Thyroid gland (tissue), 4 donors: ENCODE measurements at regions of chr19 and their contacts with region 1.

Region 1: GRCh38 chr19:37551129-37551993 is 43.2 kb downstream of the ZNF571 start:
- DNase-seq: no peak
- H3K4me3 ChIP-seq: no peak overlapping the region
- H3K27ac ChIP-seq: no peak overlapping the region
- H3K4me1 ChIP-seq: no peaks in the 10 kb centered on the region
- H3K27me3 ChIP-seq: no peaks in the 10 kb centered on the region
- CTCF ChIP-seq: no peak
- POLR2A ChIP-seq: no peak

Region 2: GRCh38 chr19:36638862-36639510 is 912.4 kb before region 1 on chr19:
- intact Hi-C with region 1: loop called (anchors 10 kb)
- DNase-seq: no peak
- H3K4me3 ChIP-seq: no peak overlapping the region
- H3K27ac ChIP-seq: no peak overlapping the region
- H3K4me1 ChIP-seq: no peaks in the 10 kb centered on the region
- H3K27me3 ChIP-seq: no peaks in the 10 kb centered on the region
- CTCF ChIP-seq: no peak
- POLR2A ChIP-seq: no peak

Region 3: DNA sequence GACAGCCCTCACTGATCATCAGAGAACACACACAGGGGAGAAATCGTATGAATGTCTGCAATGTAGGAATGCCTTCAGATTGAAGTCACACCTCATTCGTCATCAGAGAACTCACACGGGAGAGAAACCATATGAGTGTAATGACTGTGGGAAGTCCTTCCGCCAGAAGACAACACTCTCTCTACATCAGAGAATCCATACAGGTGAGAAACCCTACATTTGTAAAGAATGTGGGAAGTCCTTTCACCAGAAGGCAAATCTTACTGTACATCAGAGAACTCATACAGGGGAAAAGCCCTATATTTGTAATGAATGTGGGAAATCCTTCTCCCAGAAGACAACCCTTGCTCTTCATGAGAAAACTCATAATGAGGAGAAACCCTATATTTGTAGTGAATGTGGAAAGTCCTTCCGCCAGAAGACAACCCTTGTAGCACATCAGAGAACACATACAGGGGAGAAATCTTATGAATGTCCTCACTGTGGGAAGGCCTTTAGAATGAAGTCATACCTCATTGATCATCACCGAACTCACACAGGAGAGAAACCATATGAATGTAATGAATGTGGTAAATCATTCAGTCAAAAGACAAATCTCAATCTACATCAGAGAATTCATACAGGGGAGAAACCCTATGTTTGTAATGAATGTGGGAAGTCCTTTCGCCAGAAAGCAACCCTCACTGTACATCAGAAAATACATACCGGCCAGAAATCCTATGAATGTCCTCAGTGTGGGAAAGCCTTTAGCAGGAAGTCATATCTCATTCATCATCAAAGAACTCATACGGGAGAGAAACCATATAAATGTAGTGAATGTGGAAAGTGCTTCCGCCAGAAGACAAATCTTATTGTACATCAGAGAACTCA is 831.4 kb before region 1 on chr19:
- intact Hi-C with region 1: loop called (anchors 5 kb)
- DNase-seq: no peak
- H3K4me3 ChIP-seq: no peak overlapping the region
- H3K27ac ChIP-seq: no peak overlapping the region
- H3K4me1 ChIP-seq: no peaks in the 10 kb centered on the region
- H3K27me3 ChIP-seq: no peaks in the 10 kb centered on the region
- CTCF ChIP-seq: no peak
- POLR2A ChIP-seq: no peak

Region 4: GRCh38 chr19:36819130-36819630 is 732.2 kb before region 1 on chr19:
- intact Hi-C with region 1: loop called (anchors 10 kb)
- DNase-seq: no peak
- H3K4me3 ChIP-seq: no peak overlapping the region
- H3K27ac ChIP-seq: no peak overlapping the region
- H3K4me1 ChIP-seq: no peaks in the 10 kb centered on the region
- H3K27me3 ChIP-seq: no peaks in the 10 kb centered on the region
- CTCF ChIP-seq: no peak
- POLR2A ChIP-seq: no peak

Region 5: GRCh38 chr19:37355901-37356300 is 195.5 kb before region 1 on chr19:
- intact Hi-C with region 1: no loop called
- DNase-seq: no peak
- H3K4me3 ChIP-seq: no peak overlapping the region
- H3K27ac ChIP-seq: no peak overlapping the region
- H3K4me1 ChIP-seq: no peaks in the 10 kb centered on the region
- H3K27me3 ChIP-seq: no peaks in the 10 kb centered on the region
- CTCF ChIP-seq: no peak
- POLR2A ChIP-seq: no peak

Region 6: DNA sequence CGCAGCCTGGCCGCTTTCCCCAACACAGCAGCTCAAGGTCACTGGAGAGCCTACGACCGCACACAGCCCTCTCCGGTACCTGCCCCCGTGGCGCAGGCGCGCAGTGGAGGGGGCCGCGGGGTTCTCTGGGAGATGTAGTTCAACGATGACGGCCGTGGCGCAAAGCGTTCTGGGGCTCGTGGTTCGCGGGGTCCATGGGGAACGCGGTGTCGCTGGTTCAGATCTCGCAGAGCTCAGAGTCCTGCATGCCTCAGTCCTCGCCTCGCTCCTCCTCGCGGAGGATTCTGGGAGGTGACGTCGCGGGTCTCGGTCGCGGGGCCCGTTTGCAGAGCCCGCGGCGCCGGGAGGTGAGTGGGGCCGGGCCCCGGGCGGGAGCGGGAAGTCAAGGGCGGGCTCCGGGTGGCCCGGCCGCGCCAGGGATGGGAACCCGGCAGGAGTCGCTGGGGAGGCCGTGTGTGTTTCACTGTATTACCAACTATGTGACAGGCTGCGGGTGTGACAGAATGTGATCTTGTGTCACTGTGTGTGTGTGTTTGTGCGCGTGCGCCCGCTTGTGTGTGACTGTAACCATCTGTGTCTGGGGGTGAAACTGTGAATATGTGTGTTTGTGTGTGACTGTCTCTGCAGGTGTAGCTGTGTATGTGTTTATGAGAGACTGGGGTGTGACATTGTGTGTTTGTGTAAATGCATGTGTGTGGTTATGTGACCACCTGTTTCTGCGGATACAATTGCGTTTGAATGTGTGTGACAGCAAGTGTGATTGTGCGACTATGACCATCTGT is 180.3 kb before region 1 on chr19 and contains the start of gene ZNF527:
- intact Hi-C with region 1: no loop called
- DNase-seq: peak; percentile 98 to 99
- H3K4me3 ChIP-seq: peak within 1 kb of the TSS; percentile 17 to 53 (median 22)
- H3K27ac ChIP-seq: peak within 1 kb of the TSS; percentile 58 to 83 (median 75)
- H3K4me1 ChIP-seq: peaks cover 5 to 6% of the 10 kb centered on the region in 2 donors
- H3K27me3 ChIP-seq: no peaks in the 10 kb centered on the region
- CTCF ChIP-seq: peak in 1 of 6 experiments; percentile 0
- POLR2A ChIP-seq: peak; percentile 30 to 98
- total RNA-seq, gene ZNF527: 11.6 to 16.4 (median 12.9) TPM

Region 7: GRCh38 chr19:37452500-37453245 is 98.7 kb before region 1 on chr19:
- intact Hi-C with region 1: loop called (anchors 10 kb)
- DNase-seq: no peak
- H3K4me3 ChIP-seq: no peak overlapping the region
- H3K27ac ChIP-seq: no peak overlapping the region
- H3K4me1 ChIP-seq: no peaks in the 10 kb centered on the region
- H3K27me3 ChIP-seq: no peaks in the 10 kb centered on the region
- CTCF ChIP-seq: no peak
- POLR2A ChIP-seq: no peak

Region 8: GRCh38 chr19:37594304-37594981 is 43.1 kb after region 1 on chr19 and contains the starts of genes ZNF540 and ZNF571:
- intact Hi-C with region 1: no loop called
- DNase-seq: peak; percentile 97 to 98
- H3K4me3 ChIP-seq: peak within 1 kb of the TSS; percentile 38 to 51 (median 50)
- H3K27ac ChIP-seq: peak within 1 kb of the TSS; percentile 81 to 93 (median 92)
- H3K4me1 ChIP-seq: peaks cover 4 to 6% of the 10 kb centered on the region in 2 donors
- H3K27me3 ChIP-seq: no peaks in the 10 kb centered on the region
- CTCF ChIP-seq: no peak
- POLR2A ChIP-seq: peak in 1 of 2 donors; percentile 90
- total RNA-seq, gene ZNF540: 9.6 to 30.7 (median 11.0) TPM
- total RNA-seq, gene ZNF571: 8.7 to 19.3 (median 13.8) TPM

Region 9: GRCh38 chr19:37719111-37719926 is 168.0 kb after region 1 on chr19 and contains the start of gene ZNF607:
- intact Hi-C with region 1: no loop called
- DNase-seq: peak; percentile 93 to 95
- H3K4me3 ChIP-seq: peak within 1 kb of the TSS; percentile 40 to 96 (median 77)
- H3K27ac ChIP-seq: peak within 1 kb of the TSS; percentile 23 to 81 (median 71)
- H3K4me1 ChIP-seq: peaks cover 11 to 13% of the 10 kb centered on the region in 2 donors
- H3K27me3 ChIP-seq: no peaks in the 10 kb centered on the region
- CTCF ChIP-seq: peak in 5 of 6 experiments; percentile 44 to 80 (median 73)
- POLR2A ChIP-seq: peak in 1 of 2 donors; percentile 84
- total RNA-seq, gene ZNF607: 8.0 to 15.8 (median 11.1) TPM